ENCODE measurements at regions of chr16 and their contacts with region 1.

Region 1: GRCh38 chr16:22364241-22364640 is 10.2 kb downstream of the CDR2 start:
- DNase-seq: no peak
- H3K4me3 Mint-ChIP-seq: no peak overlapping the region
- H3K27ac Mint-ChIP-seq: no peak overlapping the region
- H3K4me1 Mint-ChIP-seq: peaks cover 61% of the 10 kb centered on the region
- H3K27me3 Mint-ChIP-seq: no peaks in the 10 kb centered on the region

Region 2: GRCh38 chr16:22374311-22375116 is 10.3 kb after region 1 on chr16 and contains the start of gene CDR2:
- CTCF ChIA-PET with region 1: interaction called, 4 read pairs
- POLR2A ChIA-PET with region 1: interaction called, 165 read pairs
- DNase-seq: peak; percentile 99
- H3K4me3 Mint-ChIP-seq: peak within 1 kb of the TSS; percentile 96
- H3K27ac Mint-ChIP-seq: peak within 1 kb of the TSS; percentile 92
- H3K4me1 Mint-ChIP-seq: peaks cover 46% of the 10 kb centered on the region
- H3K27me3 Mint-ChIP-seq: peaks cover 2% of the 10 kb centered on the region
- total RNA-seq, gene CDR2: 43.1 to 43.9 TPM

Measured in activated CD4-positive, alpha-beta memory T cell treated with anti-CD3 and anti-CD28 coated beads, Interleukin-2, amount 10 ng/mL, durations not matched to agents 7 days and 5 days (primary cell).